ENCODE measurements at regions of chr5 and their contacts with region 1.

Region 1: GRCh38 chr5:77437194-77437593 is 54.9 kb downstream of the WDR41 start:
- DNase-seq: peak in 1 of 2 experiments; percentile 59
- H3K4me3 ChIP-seq: no peak overlapping the region
- H3K4me3 Mint-ChIP-seq: no peak overlapping the region
- H3K27ac Mint-ChIP-seq: no peak overlapping the region
- H3K4me1 ChIP-seq: peaks cover 5% of the 10 kb centered on the region; the same call in 1 of the 2 replicates
- H3K4me1 Mint-ChIP-seq: peaks cover 7% of the 10 kb centered on the region
- H3K27me3 ChIP-seq: no peaks in the 10 kb centered on the region
- H3K27me3 Mint-ChIP-seq: no peaks in the 10 kb centered on the region
- CTCF ChIP-seq: peak; percentile 56 to 70

Region 2: GRCh38 chr5:77129391-77129990 is 307.7 kb before region 1 on chr5:
- CTCF ChIA-PET with region 1: interaction called, 6 read pairs
- POLR2A ChIA-PET with region 1: no interaction called
- intact Hi-C with region 1: loop called (anchors 5 kb)
- DNase-seq: peak; percentile 50 to 63
- H3K4me3 ChIP-seq: no peak overlapping the region
- H3K4me3 Mint-ChIP-seq: no peak overlapping the region
- H3K27ac Mint-ChIP-seq: no peak overlapping the region
- H3K4me1 ChIP-seq: no peaks in the 10 kb centered on the region
- H3K4me1 Mint-ChIP-seq: no peaks in the 10 kb centered on the region
- H3K27me3 ChIP-seq: no peaks in the 10 kb centered on the region
- H3K27me3 Mint-ChIP-seq: no peaks in the 10 kb centered on the region
- CTCF ChIP-seq: peak; percentile 59 to 63

Region 3: GRCh38 chr5:77143998-77144836 is 293.0 kb before region 1 on chr5:
- CTCF ChIA-PET with region 1: interaction called, 11 read pairs
- POLR2A ChIA-PET with region 1: no interaction called
- intact Hi-C with region 1: loop called (anchors 1 kb)
- DNase-seq: peak; percentile 73 to 79
- H3K4me3 ChIP-seq: no peak overlapping the region
- H3K4me3 Mint-ChIP-seq: no peak overlapping the region
- H3K27ac Mint-ChIP-seq: no peak overlapping the region
- H3K4me1 ChIP-seq: no peaks in the 10 kb centered on the region
- H3K4me1 Mint-ChIP-seq: peaks cover 7% of the 10 kb centered on the region
- H3K27me3 ChIP-seq: no peaks in the 10 kb centered on the region
- H3K27me3 Mint-ChIP-seq: no peaks in the 10 kb centered on the region
- CTCF ChIP-seq: peak; percentile 80 to 93

Region 4: DNA sequence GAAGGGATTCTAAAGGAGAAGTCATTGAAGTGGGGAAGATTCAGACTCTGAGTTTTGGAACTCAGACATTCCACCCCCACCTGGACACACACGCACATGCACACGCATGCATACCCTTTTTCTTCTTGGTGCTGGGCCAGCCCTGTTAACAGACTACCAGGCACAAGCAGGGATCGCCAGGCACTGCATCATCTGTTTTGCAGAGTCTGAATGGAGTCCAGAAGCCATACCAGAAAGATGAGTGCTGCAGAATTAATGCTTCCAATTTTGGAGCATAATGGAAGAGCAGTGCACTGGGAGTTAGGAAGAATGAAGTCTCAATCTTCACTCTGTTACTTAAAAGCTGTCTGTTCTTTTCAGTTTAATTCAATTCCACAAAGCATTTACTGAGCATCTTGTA is 131.2 kb before region 1 on chr5:
- CTCF ChIA-PET with region 1: no interaction called
- POLR2A ChIA-PET with region 1: no interaction called
- intact Hi-C with region 1: loop called (anchors 5 kb)
- DNase-seq: no peak
- H3K4me3 ChIP-seq: no peak overlapping the region
- H3K4me3 Mint-ChIP-seq: no peak overlapping the region
- H3K27ac Mint-ChIP-seq: no peak overlapping the region
- H3K4me1 ChIP-seq: peaks cover 3% of the 10 kb centered on the region; the same call in 1 of the 2 replicates
- H3K4me1 Mint-ChIP-seq: peaks cover 19% of the 10 kb centered on the region
- H3K27me3 ChIP-seq: no peaks in the 10 kb centered on the region
- H3K27me3 Mint-ChIP-seq: no peaks in the 10 kb centered on the region
- CTCF ChIP-seq: no peak

Region 5: GRCh38 chr5:77394064-77394716 is 43.0 kb before region 1 on chr5:
- CTCF ChIA-PET with region 1: interaction called, 7 read pairs
- POLR2A ChIA-PET with region 1: no interaction called
- intact Hi-C with region 1: loop called (anchors 1 kb)
- DNase-seq: peak in 1 of 2 experiments; percentile 38
- H3K4me3 ChIP-seq: no peak overlapping the region
- H3K4me3 Mint-ChIP-seq: no peak overlapping the region
- H3K27ac Mint-ChIP-seq: no peak overlapping the region
- H3K4me1 ChIP-seq: peaks cover 38% of the 10 kb centered on the region
- H3K4me1 Mint-ChIP-seq: peaks cover 35% of the 10 kb centered on the region
- H3K27me3 ChIP-seq: no peaks in the 10 kb centered on the region
- H3K27me3 Mint-ChIP-seq: no peaks in the 10 kb centered on the region
- CTCF ChIP-seq: peak in 1 of 2 experiments; percentile 25

Measured in Caco-2 (cell line).